Sciatic nerve (tissue), 2 donors: ENCODE measurements at regions of chr1 and their contacts with region 1.

Region 1: DNA sequence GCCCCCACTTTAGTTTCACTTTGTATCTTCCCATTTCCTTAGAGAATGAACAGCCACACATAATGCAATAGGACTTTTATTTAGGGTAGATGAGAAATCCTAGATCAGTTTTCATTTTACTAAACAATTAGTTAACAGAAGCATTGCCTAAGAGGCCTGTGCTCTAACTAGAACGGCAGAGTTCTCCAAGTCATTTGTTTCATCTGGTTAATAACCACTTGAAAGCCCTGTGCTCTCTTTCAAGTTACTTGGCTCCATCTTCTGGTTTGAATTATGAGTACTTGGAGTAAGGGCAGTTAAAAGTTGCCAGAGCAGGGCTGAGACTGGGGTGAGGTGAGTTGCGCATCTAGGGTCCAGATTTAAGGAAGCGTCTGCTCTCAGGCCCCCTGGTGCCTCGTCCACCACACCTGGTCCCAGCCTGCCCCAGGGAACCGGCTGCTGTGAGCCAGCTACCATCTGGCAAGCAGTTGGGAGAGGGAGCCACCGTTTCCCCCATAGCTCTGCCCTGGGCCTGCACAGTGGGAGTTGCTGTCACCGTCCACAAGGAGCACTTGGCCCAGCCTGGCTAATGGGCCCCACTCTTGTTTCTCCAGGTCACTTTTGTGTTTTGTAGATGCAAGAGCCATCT is 18.1 kb upstream of the SLC44A3 start:
- DNase-seq: no peak
- ATAC-seq: peak; percentile 77

Region 2: DNA sequence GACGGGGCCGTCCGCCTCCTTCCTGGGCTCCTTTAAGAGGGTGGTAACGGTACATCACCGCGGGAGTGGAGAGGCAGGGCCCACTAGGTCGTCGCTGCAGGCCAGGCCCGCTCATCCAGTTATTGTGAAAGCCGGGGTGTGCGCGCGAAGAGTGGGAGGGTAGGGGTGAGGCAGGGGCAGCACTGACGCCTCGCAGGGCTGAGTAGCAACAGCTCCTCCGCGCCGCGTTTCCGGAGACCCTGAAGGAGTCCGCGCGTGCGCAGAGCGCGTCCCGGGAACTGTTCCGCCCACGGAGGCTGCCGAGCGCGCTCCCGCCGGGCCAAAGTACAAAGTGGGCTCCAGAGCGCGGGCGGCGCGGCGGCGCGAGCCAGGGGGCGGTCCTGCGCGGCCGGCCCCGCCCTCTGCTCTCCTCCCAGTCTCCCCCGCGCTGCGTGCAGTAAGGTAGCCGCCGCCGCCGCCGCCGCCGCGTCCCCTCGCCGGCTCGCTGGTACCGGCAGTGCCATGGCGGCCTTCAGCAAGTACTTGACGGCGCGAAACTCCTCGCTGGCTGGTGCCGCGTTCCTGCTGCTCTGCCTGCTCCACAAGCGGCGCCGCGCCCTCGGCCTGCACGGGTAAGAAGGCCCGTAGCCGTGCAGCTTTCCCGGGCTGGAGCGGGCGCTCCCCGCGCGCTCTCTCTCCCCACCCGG is 383.9 kb before region 1 on chr1 and contains the start of gene ABCD3:
- intact Hi-C with region 1: loop called (anchors 10 kb)
- DNase-seq: peak; percentile 98
- ATAC-seq: peak; percentile 98
- total RNA-seq, gene ABCD3: 65.7 TPM

Region 3: GRCh38 chr1:94532077-94532476 is 270.0 kb before region 1 on chr1:
- intact Hi-C with region 1: loop called (anchors 10 kb)
- DNase-seq: no peak
- ATAC-seq: no peak

Region 4: DNA sequence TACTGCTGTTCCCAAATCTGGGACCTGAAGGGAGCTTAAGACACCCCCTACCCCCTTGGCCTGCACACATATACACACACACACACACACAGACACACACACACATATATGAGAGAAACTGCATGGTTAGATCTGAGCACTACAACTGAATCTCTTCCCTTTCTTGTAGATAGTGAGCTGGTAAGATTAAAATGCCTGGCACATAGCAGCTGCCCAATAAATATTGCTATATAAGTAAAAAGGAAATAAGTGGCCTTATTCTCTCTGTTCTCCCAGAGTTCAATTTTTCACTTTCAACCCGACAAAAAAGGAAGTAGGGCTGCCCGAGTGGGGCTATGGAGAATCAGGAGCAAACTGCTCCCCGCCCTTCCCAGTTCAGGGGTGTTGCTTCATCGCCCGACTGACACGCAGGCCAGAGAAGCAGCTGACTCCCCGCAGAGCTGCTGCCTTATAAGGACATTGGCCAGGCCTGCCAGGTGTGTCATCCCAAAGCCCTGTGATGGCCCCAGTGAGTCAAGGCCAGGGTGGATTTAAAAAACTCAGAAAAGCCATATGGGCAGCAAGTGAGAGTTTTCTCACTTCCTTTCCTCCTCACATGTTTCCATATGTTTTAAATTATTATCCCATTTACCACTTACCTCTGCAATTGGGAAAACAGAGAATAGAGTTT is 88.4 kb before region 1 on chr1:
- intact Hi-C with region 1: no loop called
- DNase-seq: peak; percentile 92
- ATAC-seq: peak; percentile 98